Activated CD8-positive, alpha-beta memory T cell treated with anti-CD3 and anti-CD28 coated beads, Interleukin-2, amount 10 ng/mL, durations not matched to agents 7 days and 5 days (primary cell): ENCODE measurements at regions of chr4 and their contacts with region 1.

Region 1: GRCh38 chr4:121307445-121308327 is 73.1 kb downstream of the QRFPR start:
- DNase-seq: peak; percentile 74
- ATAC-seq: peak; percentile 83
- H3K4me3 Mint-ChIP-seq: peak overlapping the region; percentile 27
- H3K27ac Mint-ChIP-seq: peak overlapping the region; percentile 86
- H3K4me1 Mint-ChIP-seq: peaks cover 27% of the 10 kb centered on the region
- H3K27me3 Mint-ChIP-seq: peaks cover 2% of the 10 kb centered on the region

Region 2: GRCh38 chr4:121219227-121219626 is 88.5 kb before region 1 on chr4:
- CTCF ChIA-PET with region 1: interaction called, 11 read pairs
- DNase-seq: no peak
- ATAC-seq: peak; percentile 18
- H3K4me3 Mint-ChIP-seq: peak overlapping the region; percentile 68
- H3K27ac Mint-ChIP-seq: peak overlapping the region; percentile 92
- H3K4me1 Mint-ChIP-seq: peaks cover 68% of the 10 kb centered on the region
- H3K27me3 Mint-ChIP-seq: no peaks in the 10 kb centered on the region

Region 3: GRCh38 chr4:121252224-121252806 is 55.4 kb before region 1 on chr4:
- CTCF ChIA-PET with region 1: interaction called, 28 read pairs
- DNase-seq: peak; percentile 77
- ATAC-seq: no peak
- H3K4me3 Mint-ChIP-seq: no peak overlapping the region
- H3K27ac Mint-ChIP-seq: peak overlapping the region; percentile 71
- H3K4me1 Mint-ChIP-seq: peaks cover 75% of the 10 kb centered on the region
- H3K27me3 Mint-ChIP-seq: no peaks in the 10 kb centered on the region

Region 4: DNA sequence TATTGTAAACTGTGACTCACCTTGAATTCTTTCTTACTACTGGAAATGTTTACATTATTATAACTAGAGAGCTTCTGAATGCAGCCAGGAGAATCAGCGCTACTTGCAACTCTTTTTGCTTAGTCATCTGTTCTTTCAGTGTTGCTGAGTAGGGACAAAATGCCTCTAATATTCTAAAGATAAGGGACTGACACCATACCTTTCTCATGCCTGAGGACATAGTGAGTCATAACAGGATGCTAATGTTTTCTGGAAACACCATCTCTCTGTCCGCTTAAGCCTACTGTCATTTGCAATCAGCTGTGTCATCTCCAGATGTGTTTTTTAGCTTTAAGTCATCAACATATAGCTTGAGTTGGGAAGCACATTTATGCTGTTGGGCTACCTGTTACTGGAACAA is 35.2 kb before region 1 on chr4:
- CTCF ChIA-PET with region 1: interaction called, 14 read pairs
- DNase-seq: no peak
- ATAC-seq: peak; percentile 86
- H3K4me3 Mint-ChIP-seq: no peak overlapping the region
- H3K27ac Mint-ChIP-seq: peak overlapping the region; percentile 3
- H3K4me1 Mint-ChIP-seq: peaks cover 14% of the 10 kb centered on the region
- H3K27me3 Mint-ChIP-seq: no peaks in the 10 kb centered on the region

Region 5: DNA sequence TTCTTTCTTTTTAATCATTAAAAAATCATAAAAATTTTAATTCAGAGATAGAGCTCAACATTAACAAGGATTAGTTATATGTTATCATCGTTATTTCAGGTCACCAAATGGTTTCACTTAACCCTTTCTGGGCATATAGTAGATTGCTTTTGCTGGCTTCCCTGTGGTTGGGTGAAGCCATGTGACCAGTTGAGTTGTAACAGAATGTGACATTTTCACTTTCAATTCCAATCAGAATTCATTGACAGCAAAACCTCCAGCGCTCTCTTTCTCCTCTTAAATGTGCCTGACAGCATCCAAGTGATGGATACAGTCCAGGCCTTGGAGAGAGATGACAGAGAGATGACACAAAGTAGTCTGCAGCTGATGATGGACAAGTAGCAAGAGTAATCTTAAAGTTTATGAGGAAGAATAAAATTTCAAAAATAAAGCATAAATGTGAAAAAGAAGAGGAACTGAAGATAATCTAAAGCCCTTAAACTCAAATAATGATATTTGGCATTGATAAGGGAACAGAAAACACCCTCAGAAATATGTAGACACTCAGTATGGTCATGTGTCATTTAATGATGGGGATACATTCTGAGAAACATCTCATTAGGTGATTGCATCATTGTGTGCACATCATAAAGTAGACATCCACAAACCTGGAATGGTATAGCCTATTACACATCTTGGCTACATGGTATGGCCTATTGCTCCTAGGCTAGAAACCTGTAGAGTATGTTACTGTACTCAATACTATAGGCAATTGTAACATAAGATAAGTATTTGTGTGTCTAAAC is 165.4 kb after region 1 on chr4:
- CTCF ChIA-PET with region 1: no interaction called
- DNase-seq: peak; percentile 59
- ATAC-seq: peak; percentile 64
- H3K4me3 Mint-ChIP-seq: no peak overlapping the region
- H3K27ac Mint-ChIP-seq: peak overlapping the region; percentile 77
- H3K4me1 Mint-ChIP-seq: peaks cover 9% of the 10 kb centered on the region
- H3K27me3 Mint-ChIP-seq: peaks cover 9% of the 10 kb centered on the region